Left lung (tissue), 14 donors: ENCODE measurements at regions of chr14 and their contacts with region 1.

Region 1: GRCh38 chr14:102234331-102235264 is 70.4 kb downstream of the MOK start:
- DNase-seq: no peak
- ATAC-seq: no peak
- H3K4me3 ChIP-seq: peak overlapping the region in 1 of 2 donors; percentile 16
- H3K27ac ChIP-seq: no peak overlapping the region
- H3K4me1 ChIP-seq: no peaks in the 10 kb centered on the region
- H3K27me3 ChIP-seq: no peaks in the 10 kb centered on the region
- CTCF ChIP-seq: no peak

Region 2: DNA sequence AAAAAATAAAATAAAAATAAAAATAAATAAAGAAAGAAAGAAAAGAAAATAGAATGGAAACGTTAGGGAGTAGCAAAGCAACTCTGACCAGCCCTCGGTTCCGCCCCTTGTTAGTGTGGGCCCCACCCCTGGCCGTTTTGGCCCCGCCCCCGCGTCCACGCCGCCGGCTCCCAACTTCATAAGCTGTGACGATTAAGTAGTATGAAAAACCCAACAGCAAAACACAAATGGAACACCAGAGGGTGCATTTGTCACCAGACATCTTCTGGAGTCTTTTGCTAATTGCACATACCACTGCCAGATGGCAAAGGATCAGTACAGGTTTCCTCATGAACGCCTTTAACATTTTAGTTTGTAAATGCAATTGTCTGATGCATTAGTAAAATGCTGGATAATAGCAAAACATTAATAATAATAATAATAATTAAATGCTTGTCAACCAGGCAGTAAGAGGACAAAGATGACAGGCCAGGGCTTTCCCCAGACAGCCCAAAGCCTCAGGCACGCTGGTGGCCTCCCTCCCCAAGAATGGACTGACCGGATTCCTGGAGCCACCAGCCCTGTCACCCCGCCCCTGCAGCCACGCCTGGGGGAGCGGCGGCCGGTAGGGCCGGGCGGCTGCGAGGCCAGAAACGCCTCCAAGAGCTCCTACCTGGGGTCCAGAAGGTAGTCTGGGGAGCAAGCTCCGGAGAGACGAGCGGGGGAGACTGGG is 171.4 kb before region 1 on chr14:
- intact Hi-C with region 1: no loop called
- DNase-seq: peak; percentile 52 to 92 (median 85)
- ATAC-seq: peak; percentile 98
- H3K4me3 ChIP-seq: no peak overlapping the region
- H3K27ac ChIP-seq: no peak overlapping the region
- H3K4me1 ChIP-seq: peaks cover 0 to 11% of the 10 kb centered on the region in 2 donors
- H3K27me3 ChIP-seq: no peaks in the 10 kb centered on the region
- CTCF ChIP-seq: peak; percentile 30 to 35

Region 3: DNA sequence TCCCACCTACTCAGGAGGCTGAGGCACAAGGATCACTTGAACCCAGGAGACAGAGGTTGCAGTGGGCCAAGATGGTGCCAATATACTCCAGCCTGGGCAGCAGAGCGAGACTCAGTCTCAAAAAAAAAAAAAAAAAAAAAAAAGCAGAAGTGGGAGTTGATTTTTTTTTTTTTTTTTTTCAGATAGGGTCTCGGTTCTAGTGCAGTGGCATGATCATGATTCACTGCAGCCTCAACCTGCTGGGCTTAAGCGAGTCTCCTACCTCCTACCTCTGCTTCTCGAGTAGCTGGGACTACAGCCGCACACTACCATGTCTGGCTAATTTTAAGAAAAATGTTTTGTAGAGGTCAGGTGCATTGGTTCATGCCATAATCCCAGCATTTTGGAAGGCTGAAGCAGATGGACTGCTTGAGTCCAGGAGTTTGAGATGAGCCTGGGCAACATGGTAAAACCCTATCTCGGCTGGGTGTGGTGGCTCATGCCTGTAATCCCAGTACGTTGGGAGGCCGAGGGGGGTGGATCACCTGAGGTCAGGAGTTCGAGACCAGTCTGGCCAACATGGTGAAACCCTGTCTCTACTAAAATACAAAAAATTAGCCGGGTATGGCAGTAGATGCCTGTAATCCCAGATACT is 131.4 kb before region 1 on chr14:
- intact Hi-C with region 1: no loop called
- DNase-seq: no peak
- ATAC-seq: no peak
- H3K4me3 ChIP-seq: no peak overlapping the region
- H3K27ac ChIP-seq: no peak overlapping the region
- H3K4me1 ChIP-seq: peaks cover 0 to 10% of the 10 kb centered on the region in 2 donors
- H3K27me3 ChIP-seq: no peaks in the 10 kb centered on the region
- CTCF ChIP-seq: no peak

Region 4: DNA sequence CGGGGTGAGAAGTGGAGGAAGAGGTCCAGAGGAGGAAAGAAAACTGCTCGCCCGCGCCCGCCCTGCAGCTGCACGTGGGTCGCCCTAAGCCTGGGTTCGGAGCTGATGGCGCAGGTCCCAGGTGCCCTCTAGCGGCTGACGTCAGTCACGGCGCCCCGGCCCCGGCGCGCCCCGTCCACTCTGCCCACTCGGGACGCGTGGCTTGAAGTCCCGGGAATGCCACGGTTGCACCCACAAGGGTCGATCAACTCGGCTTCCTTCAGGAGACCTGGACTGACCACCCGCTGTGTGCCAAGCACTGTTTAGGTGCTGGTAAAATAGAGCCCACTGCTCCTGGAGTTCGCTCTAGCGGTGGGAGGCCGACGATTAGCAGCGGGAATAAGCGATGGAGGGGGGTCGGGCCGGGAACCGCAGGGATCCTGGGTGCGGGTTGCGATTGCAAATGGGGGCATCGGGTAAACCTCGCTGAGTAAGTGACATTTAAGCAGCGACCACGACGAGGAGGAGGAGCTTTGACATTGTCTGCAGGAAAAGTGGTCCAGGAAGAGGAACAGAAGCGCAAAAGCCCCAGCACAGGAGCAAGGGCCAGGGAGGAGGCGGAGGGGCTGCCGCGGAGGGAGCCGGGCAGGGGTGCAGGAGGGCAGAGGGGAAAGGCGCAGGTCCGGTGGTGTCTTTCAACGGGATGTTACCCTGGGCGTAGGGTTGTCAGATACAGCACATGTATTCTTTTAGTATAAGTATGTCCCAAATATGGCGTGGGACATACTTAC is 79.8 kb after region 1 on chr14:
- intact Hi-C with region 1: loop called in 1 of 2 experiments (anchors 5 kb)
- DNase-seq: peak; percentile 81 to 97 (median 90)
- ATAC-seq: peak; percentile 80
- H3K4me3 ChIP-seq: peak overlapping the region; percentile 38 to 53
- H3K27ac ChIP-seq: peak overlapping the region in 1 of 2 donors; percentile 23
- H3K4me1 ChIP-seq: peaks cover 3 to 42% of the 10 kb centered on the region in 2 donors
- H3K27me3 ChIP-seq: no peaks in the 10 kb centered on the region
- CTCF ChIP-seq: peak; percentile 94 to 96

Region 5: GRCh38 chr14:102545461-102546265 is 311.1 kb after region 1 on chr14:
- intact Hi-C with region 1: no loop called
- DNase-seq: peak in 1 of 4 donors; percentile 78
- ATAC-seq: no peak
- H3K4me3 ChIP-seq: no peak overlapping the region
- H3K27ac ChIP-seq: no peak overlapping the region
- H3K4me1 ChIP-seq: peaks cover 0 to 14% of the 10 kb centered on the region in 2 donors
- H3K27me3 ChIP-seq: peaks cover 18 to 53% of the 10 kb centered on the region in 2 donors
- CTCF ChIP-seq: no peak